ENCODE measurements at regions of chr1 and their contacts with region 1.

Region 1: GRCh38 chr1:11214698-11215380 is 25.7 kb downstream of the ANGPTL7 start:
- DNase-seq: no peak
- ATAC-seq: no peak

Region 2: DNA sequence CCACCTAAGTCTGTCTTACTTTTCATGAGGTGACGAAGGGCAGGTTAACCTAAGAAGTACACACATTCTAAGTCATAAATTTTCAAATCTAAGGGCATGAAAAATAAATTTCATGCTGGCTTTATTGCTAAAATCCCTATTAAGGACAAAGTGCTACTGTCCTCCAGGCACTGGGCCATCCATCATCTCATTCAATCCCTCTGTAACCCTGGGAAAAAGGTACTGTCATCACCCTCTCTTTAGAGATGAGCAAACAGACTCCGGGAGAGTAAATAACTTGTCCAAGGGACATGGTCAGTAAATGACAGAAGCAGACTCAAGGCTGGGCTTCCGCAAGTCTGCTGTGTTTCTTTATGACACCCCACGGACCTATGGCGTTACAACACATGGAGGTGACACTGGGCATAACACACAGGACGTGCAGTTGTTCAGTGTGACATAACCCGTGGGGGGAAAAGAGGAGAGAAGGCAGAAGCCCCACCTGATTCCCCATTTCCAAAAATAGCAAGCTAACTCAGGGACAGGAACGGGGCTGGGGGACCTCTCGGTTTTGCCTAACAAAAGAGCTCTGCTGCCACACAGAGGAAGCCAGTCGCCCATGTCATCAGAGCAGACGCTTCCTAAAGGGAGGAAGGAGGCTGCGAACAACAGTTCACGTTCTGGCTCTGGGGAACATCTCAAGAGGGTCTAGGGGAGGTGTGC is 142.5 kb before region 1 on chr1:
- intact Hi-C with region 1: loop called (anchors 10 kb)
- DNase-seq: no peak
- ATAC-seq: no peak